ENCODE measurements at regions of chr5 and their contacts with region 1.

Region 1: DNA sequence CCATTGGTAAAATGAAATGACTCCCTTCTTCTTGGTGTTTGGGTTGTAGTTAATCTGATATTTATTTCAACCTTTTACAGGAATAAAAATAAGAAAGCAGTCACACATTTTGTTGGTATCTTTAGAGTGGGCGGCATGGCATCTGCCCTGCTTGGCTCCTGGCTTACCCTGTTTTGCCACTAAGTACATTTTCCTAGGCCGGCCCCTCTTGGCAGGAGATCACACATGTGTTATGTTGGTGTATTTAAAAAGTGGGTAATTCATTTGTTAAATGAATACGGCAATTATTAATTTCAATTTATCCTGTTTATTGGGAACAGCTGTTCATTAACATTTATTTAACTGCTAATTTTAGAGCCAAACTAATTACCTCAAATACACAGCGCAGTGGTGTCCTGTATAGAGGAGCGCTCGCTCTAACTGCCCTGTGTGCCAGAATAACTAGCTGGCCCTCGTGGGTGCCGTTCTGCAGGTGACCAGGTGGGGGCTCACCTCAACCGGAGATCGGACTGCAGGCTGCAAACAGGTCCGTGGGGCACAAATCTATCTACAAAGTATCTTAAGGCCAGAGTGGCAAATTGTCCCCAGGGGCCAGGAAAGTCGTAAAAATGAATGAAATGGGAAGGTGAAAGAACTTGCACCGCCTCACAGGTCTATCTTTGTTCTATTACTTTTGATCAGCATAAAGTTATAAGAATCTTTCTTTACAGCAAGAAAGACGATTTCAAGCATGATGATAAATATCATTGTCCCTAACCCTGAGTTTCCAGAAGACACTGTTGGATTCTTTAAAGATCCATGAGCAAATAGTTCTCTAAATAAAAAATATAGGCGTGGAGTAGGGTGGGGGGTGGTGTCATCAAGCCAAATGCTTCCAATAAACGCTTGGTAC is 26.2 kb upstream of the GPR151 start:
- DNase-seq: peak; percentile 38
- ATAC-seq: peak; percentile 98
- H3K4me3 ChIP-seq: no peak overlapping the region
- H3K27ac ChIP-seq: no peak overlapping the region
- H3K4me1 ChIP-seq: no peaks in the 10 kb centered on the region
- H3K27me3 ChIP-seq: no peaks in the 10 kb centered on the region
- CTCF ChIP-seq: peak; percentile 86
- EP300 ChIP-seq: no peak
- POLR2A ChIP-seq: no peak
- RAD21 ChIP-seq: 0 out of 2 replicates have a peak, but pooled peaks have one; percentile 35

Region 2: GRCh38 chr5:146510559-146511125 is 31.6 kb before region 1 on chr5:
- CTCF ChIA-PET with region 1: no interaction called
- POLR2A ChIA-PET with region 1: no interaction called
- in situ Hi-C with region 1: no loop called
- intact Hi-C with region 1: no loop called
- DNase-seq: no peak
- ATAC-seq: no peak
- H3K4me3 ChIP-seq: no peak overlapping the region
- H3K27ac ChIP-seq: no peak overlapping the region
- H3K4me1 ChIP-seq: no peaks in the 10 kb centered on the region
- H3K27me3 ChIP-seq: no peaks in the 10 kb centered on the region
- CTCF ChIP-seq: no peak
- EP300 ChIP-seq: no peak
- POLR2A ChIP-seq: no peak
- RAD21 ChIP-seq: no peak

Region 3: GRCh38 chr5:146565764-146566367 is 23.7 kb after region 1 on chr5:
- CTCF ChIA-PET with region 1: no interaction called
- POLR2A ChIA-PET with region 1: no interaction called
- in situ Hi-C with region 1: no loop called
- intact Hi-C with region 1: no loop called
- DNase-seq: peak; percentile 65
- ATAC-seq: peak; percentile 98
- H3K4me3 ChIP-seq: no peak overlapping the region
- H3K27ac ChIP-seq: no peak overlapping the region
- H3K4me1 ChIP-seq: no peaks in the 10 kb centered on the region
- H3K27me3 ChIP-seq: no peaks in the 10 kb centered on the region
- CTCF ChIP-seq: peak; percentile 79
- EP300 ChIP-seq: no peak
- POLR2A ChIP-seq: no peak
- RAD21 ChIP-seq: no peak

Region 4: DNA sequence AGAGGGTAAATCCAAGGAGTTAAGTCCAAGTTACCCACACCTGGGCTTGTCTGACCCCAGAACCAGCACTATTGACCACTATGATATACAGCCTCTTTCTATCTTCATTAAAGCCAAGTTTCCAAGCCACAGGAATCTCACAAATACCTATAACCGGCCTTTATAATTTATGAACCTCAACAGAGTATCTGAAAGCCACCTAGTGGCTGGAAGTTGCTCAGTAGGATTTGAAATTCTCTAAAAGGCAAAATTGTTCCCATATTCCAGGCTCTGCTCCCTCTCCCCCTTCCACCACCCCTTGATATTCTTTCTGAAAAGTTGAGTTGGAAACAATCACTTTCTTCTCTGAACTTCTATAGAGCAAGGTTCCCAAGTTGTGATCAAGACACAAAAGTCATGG is 80.2 kb after region 1 on chr5:
- CTCF ChIA-PET with region 1: no interaction called
- POLR2A ChIA-PET with region 1: no interaction called
- in situ Hi-C with region 1: no loop called
- intact Hi-C with region 1: loop called (anchors 5 kb)
- DNase-seq: no peak
- ATAC-seq: no peak
- H3K4me3 ChIP-seq: no peak overlapping the region
- H3K27ac ChIP-seq: no peak overlapping the region
- H3K4me1 ChIP-seq: peaks cover 12% of the 10 kb centered on the region
- H3K27me3 ChIP-seq: no peaks in the 10 kb centered on the region
- CTCF ChIP-seq: no peak
- EP300 ChIP-seq: no peak
- POLR2A ChIP-seq: no peak
- RAD21 ChIP-seq: no peak

Region 5: GRCh38 chr5:146690880-146691355 is 148.7 kb after region 1 on chr5:
- CTCF ChIA-PET with region 1: no interaction called
- POLR2A ChIA-PET with region 1: no interaction called
- in situ Hi-C with region 1: no loop called
- intact Hi-C with region 1: no loop called
- DNase-seq: no peak
- ATAC-seq: no peak
- H3K4me3 ChIP-seq: no peak overlapping the region
- H3K27ac ChIP-seq: no peak overlapping the region
- H3K4me1 ChIP-seq: no peaks in the 10 kb centered on the region
- H3K27me3 ChIP-seq: peaks cover 0 to 4% of the 10 kb centered on the region in 2 experiments; a peak in 1 of 5 replicates
- CTCF ChIP-seq: no peak
- EP300 ChIP-seq: no peak
- POLR2A ChIP-seq: no peak
- RAD21 ChIP-seq: no peak

Region 6: DNA sequence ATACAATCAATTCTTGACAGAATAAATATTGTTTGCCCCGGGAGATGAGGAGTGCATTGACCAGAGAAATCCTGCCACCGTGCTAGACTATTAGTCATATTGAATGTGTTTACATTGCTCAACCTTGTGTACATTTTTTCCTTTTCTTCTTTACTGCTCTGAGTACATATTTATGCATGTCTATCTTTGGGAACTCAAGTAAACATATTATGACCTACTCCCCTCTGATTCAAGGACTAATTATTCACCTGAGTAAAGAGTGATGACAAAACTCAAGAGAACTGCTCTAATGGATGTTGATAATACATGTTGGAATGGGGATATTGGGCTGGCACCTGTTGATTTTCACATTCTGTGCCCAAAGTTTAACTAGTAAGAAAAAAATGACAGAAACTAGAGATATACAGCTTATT is 1293.2 kb after region 1 on chr5:
- CTCF ChIA-PET with region 1: no interaction called
- POLR2A ChIA-PET with region 1: no interaction called
- in situ Hi-C with region 1: no loop called
- intact Hi-C with region 1: no loop called
- DNase-seq: peak; percentile 94
- ATAC-seq: peak; percentile 97
- H3K4me3 ChIP-seq: no peak overlapping the region
- H3K27ac ChIP-seq: no peak overlapping the region
- H3K4me1 ChIP-seq: peaks cover 58% of the 10 kb centered on the region
- H3K27me3 ChIP-seq: peaks cover 0 to 23% of the 10 kb centered on the region in 2 experiments; a peak in 3 of 5 replicates
- CTCF ChIP-seq: no peak
- EP300 ChIP-seq: peak; percentile 95 to 97
- POLR2A ChIP-seq: no peak
- RAD21 ChIP-seq: no peak

Measured in HepG2 (cell line).